Panc1 (cell line): ENCODE measurements at regions of chr2 and their contacts with region 1.

Region 1: GRCh38 chr2:8761529-8762164 is 75.8 kb downstream of the KIDINS220 start:
- DNase-seq: peak; percentile 8
- ATAC-seq: no peak
- H3K4me3 ChIP-seq: no peak overlapping the region
- H3K27ac ChIP-seq: no peak overlapping the region
- H3K4me1 ChIP-seq: no peaks in the 10 kb centered on the region
- H3K27me3 ChIP-seq: no peaks in the 10 kb centered on the region
- CTCF ChIP-seq: peak; percentile 63; the same call in 1 of the 2 replicates

Region 2: GRCh38 chr2:8693155-8693821 is 68.4 kb before region 1 on chr2:
- CTCF ChIA-PET with region 1: interaction called, 5 read pairs
- POLR2A ChIA-PET with region 1: no interaction called
- in situ Hi-C with region 1: no loop called
- intact Hi-C with region 1: loop called (anchors 1 kb)
- DNase-seq: no peak
- ATAC-seq: peak; percentile 95
- H3K4me3 ChIP-seq: peak overlapping the region; percentile 36 to 47
- H3K27ac ChIP-seq: no peak overlapping the region
- H3K4me1 ChIP-seq: peaks cover 5% of the 10 kb centered on the region; the same call in 1 of the 2 replicates
- H3K27me3 ChIP-seq: 0 out of 2 replicates have a peak, but pooled peaks cover 3% of the 10 kb centered on the region
- CTCF ChIP-seq: peak; percentile 97

Region 3: GRCh38 chr2:9053534-9053931 is 291.9 kb after region 1 on chr2:
- CTCF ChIA-PET with region 1: no interaction called
- POLR2A ChIA-PET with region 1: no interaction called
- in situ Hi-C with region 1: no loop called
- intact Hi-C with region 1: no loop called
- DNase-seq: no peak
- ATAC-seq: no peak
- H3K4me3 ChIP-seq: no peak overlapping the region
- H3K27ac ChIP-seq: no peak overlapping the region
- H3K4me1 ChIP-seq: no peaks in the 10 kb centered on the region
- H3K27me3 ChIP-seq: no peaks in the 10 kb centered on the region
- CTCF ChIP-seq: no peak